Right cardiac atrium (tissue), 5 donors: ENCODE measurements at regions of chr15 and their contacts with region 1.

Region 1: DNA sequence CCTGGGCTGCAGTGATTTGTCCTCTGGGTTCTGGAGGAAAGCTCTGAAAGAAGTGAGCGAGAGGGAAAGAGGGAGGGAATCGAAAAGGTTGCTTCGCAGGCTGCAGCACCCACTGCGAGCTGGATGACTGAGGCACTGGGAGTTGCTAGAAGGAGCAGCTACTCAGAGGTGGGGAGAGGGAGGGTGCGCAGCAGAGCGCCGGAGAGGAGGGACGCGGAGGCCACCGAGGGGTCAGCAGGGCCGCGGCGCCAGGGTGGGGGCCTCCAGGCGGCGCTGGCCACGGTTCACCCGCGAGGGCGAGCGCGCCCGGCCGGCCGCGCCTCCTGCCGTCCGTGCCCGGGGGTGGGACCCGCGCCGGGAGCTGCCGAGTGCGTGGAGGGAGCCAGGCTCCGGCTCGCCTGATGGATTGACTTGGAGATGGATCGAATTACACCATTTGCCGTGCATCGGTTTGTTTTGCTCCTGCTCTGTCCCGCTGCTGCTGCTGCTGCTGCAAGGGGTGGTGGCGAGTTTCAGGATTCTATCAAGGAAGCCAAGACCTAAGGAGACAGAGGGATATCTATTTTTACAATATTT is at the start of gene SEMA6D:
- DNase-seq: peak; percentile 83 to 94 (median 94)
- ATAC-seq: peak; percentile 84 to 91
- H3K4me3 ChIP-seq: peak within 1 kb of the TSS; percentile 96
- H3K27ac ChIP-seq: peak within 1 kb of the TSS; percentile 95
- H3K4me1 ChIP-seq: peaks cover 4% of the 10 kb centered on the region
- H3K27me3 ChIP-seq: no peaks in the 10 kb centered on the region
- total RNA-seq, gene SEMA6D: 7.0 to 28.3 (median 22.3) TPM

Region 2: DNA sequence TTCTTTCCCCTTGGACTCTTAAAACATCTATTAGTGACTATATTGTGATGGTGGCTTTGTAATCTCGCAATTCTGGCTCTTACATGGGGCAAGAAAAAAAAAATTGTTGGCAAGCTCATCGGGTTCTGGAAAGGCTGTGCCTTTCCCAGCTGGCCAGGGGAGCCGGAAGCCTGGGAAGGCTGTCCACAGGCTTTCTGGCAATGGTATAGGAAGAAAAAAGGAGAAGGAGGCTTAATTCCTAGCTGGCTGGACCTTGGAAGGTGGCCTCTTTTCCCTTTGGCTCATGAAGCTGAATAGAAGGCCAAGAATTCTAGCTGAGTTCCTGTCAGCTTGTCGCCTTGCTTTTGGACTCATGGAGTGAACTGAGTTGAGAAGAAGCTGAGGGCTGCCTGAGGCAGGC is 243.3 kb before region 1 on chr15:
- intact Hi-C with region 1: loop called in 1 of 4 experiments (anchors 10 kb)
- DNase-seq: peak; percentile 77 to 90 (median 86)
- ATAC-seq: peak; percentile 98 to 99
- H3K4me3 ChIP-seq: no peak overlapping the region
- H3K27ac ChIP-seq: no peak overlapping the region
- H3K4me1 ChIP-seq: no peaks in the 10 kb centered on the region
- H3K27me3 ChIP-seq: no peaks in the 10 kb centered on the region

Region 3: DNA sequence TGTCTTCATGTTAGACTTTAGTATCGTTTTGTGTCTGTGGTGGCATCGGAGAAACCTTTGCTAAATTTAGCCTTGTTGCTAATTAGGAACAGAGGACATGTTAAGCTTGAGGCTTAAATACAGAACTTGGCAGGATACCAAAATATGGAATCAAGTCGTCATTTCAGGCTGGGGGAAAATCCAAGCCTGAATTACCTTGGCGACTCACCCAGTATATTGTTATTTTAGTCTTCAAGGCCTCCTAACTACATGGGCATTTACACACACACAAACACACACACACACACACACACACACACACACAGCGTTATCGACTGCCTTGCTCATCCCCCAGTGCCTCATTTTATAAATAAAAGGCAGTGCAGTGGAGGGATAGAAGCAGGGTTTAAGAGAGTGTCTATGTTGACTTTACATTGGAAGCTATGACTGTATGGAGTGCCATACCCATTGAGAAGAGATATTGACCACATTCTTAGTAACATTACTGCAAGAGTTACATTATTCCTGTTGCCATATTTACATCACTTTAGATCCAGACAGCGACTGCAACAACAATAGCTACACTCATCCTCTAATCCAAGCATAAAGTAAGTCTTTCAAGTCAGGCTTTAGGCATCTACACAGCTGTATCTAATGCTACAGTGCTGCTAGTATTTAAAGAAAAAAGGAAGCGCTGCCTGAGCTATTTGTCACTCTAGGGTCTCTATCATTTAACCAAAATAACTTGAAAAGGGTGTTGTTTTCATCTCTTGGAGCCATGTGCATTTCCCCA is 210.6 kb before region 1 on chr15:
- intact Hi-C with region 1: loop called in 1 of 4 experiments (anchors 10 kb)
- DNase-seq: peak in 1 of 3 donors; percentile 36
- ATAC-seq: peak; percentile 42 to 63
- H3K4me3 ChIP-seq: no peak overlapping the region
- H3K27ac ChIP-seq: no peak overlapping the region
- H3K4me1 ChIP-seq: peaks cover 8% of the 10 kb centered on the region
- H3K27me3 ChIP-seq: no peaks in the 10 kb centered on the region

Region 4: GRCh38 chr15:47824185-47824584 is 107.1 kb after region 1 on chr15:
- intact Hi-C with region 1: no loop called
- DNase-seq: no peak
- ATAC-seq: no peak
- H3K4me3 ChIP-seq: no peak overlapping the region
- H3K27ac ChIP-seq: no peak overlapping the region
- H3K4me1 ChIP-seq: no peaks in the 10 kb centered on the region
- H3K27me3 ChIP-seq: no peaks in the 10 kb centered on the region